CD4-positive, alpha-beta memory T cell (primary cell): ENCODE measurements at regions of chr1 and their contacts with region 1.

Region 1: GRCh38 chr1:168342572-168343280 is 62.0 kb downstream of the TBX19 start:
- DNase-seq: peak; percentile 86 to 91 (median 89)
- H3K4me3 ChIP-seq: no peak overlapping the region
- H3K4me3 Mint-ChIP-seq: peak overlapping the region; percentile 55 to 82 (median 64)
- H3K27ac ChIP-seq: peak overlapping the region; percentile 17
- H3K27ac Mint-ChIP-seq: peak overlapping the region; percentile 91 to 97 (median 93)
- H3K4me1 ChIP-seq: peaks cover 34% of the 10 kb centered on the region
- H3K4me1 Mint-ChIP-seq: peaks cover 34 to 74% (median 49%) of the 10 kb centered on the region in 4 donors
- H3K27me3 ChIP-seq: no peaks in the 10 kb centered on the region
- H3K27me3 Mint-ChIP-seq: no peaks in the 10 kb centered on the region

Region 2: GRCh38 chr1:168328731-168329399 is 13.9 kb before region 1 on chr1:
- CTCF ChIA-PET with region 1: interaction called, 19 read pairs
- POLR2A ChIA-PET with region 1: no interaction called
- intact Hi-C with region 1: no loop called
- DNase-seq: no peak
- H3K4me3 ChIP-seq: no peak overlapping the region
- H3K4me3 Mint-ChIP-seq: no peak overlapping the region
- H3K27ac ChIP-seq: no peak overlapping the region
- H3K27ac Mint-ChIP-seq: peak overlapping the region in 1 of 7 donors; percentile 19
- H3K4me1 ChIP-seq: no peaks in the 10 kb centered on the region
- H3K4me1 Mint-ChIP-seq: no peaks in the 10 kb centered on the region
- H3K27me3 ChIP-seq: no peaks in the 10 kb centered on the region
- H3K27me3 Mint-ChIP-seq: no peaks in the 10 kb centered on the region

Region 3: GRCh38 chr1:168386949-168387586 is 44.3 kb after region 1 on chr1:
- CTCF ChIA-PET with region 1: interaction called, 32 read pairs
- POLR2A ChIA-PET with region 1: interaction called, 6 read pairs
- intact Hi-C with region 1: no loop called
- DNase-seq: peak; percentile 73 to 85 (median 77)
- H3K4me3 ChIP-seq: peak overlapping the region in 1 of 2 donors; percentile 41
- H3K4me3 Mint-ChIP-seq: peak overlapping the region; percentile 59 to 87 (median 71)
- H3K27ac ChIP-seq: no peak overlapping the region
- H3K27ac Mint-ChIP-seq: peak overlapping the region; percentile 84 to 98 (median 94)
- H3K4me1 ChIP-seq: peaks cover 18% of the 10 kb centered on the region
- H3K4me1 Mint-ChIP-seq: peaks cover 11 to 35% (median 25%) of the 10 kb centered on the region in 4 donors
- H3K27me3 ChIP-seq: no peaks in the 10 kb centered on the region
- H3K27me3 Mint-ChIP-seq: peaks cover 0 to 2% of the 10 kb centered on the region in 2 donors

Region 4: DNA sequence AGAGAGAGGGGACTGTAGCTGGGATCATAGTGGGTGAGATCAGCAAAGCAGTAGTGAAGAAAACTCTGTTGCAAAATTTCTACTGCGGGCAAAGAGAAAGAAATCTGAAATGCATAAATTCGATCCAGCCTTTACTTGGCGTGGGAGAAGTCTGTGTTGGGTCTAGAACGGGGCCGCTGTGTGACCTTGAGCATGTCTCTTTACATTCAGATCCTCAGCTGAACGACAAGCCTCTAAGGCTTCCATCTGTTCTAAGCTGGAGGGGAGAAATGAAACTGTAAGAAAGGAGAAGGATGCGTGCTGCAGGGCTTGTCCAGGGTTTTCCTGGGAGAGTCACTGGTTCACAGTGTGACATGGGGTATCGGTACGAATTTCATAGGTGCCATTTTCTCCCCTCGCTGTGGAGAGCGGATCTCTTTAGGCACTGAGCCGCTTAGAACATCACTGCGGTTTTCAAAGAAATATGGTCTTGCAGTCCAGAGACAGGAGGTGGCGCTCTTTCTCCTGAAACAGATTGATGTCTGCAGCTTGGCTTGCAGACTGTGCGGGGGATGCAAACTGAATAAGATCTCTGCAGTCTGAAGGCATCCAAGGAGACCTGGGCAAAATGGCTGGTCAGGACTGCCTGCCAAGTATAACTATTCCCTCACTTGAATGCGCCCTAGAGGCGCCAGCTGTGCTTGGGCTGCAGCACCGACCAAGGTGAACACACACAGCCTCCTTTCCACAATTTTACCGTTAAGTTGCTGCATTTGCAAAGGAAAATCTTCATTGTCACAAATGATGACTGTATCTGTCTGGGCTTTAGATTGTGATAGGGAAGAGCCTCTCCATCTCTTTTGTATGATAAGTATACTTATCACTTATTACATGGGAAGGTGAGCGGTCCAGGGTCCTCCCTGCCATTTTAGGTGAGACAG is 97.0 kb after region 1 on chr1:
- CTCF ChIA-PET with region 1: interaction called, 249 read pairs
- POLR2A ChIA-PET with region 1: interaction called, 34 read pairs
- intact Hi-C with region 1: loop called (anchors 1 kb)
- DNase-seq: peak; percentile 80 to 84 (median 82)
- H3K4me3 ChIP-seq: peak overlapping the region in 1 of 2 donors; percentile 46
- H3K4me3 Mint-ChIP-seq: peak overlapping the region; percentile 66 to 92 (median 82)
- H3K27ac ChIP-seq: no peak overlapping the region
- H3K27ac Mint-ChIP-seq: peak overlapping the region; percentile 70 to 93 (median 88)
- H3K4me1 ChIP-seq: peaks cover 51% of the 10 kb centered on the region
- H3K4me1 Mint-ChIP-seq: peaks cover 34 to 69% (median 46%) of the 10 kb centered on the region in 4 donors
- H3K27me3 ChIP-seq: no peaks in the 10 kb centered on the region
- H3K27me3 Mint-ChIP-seq: no peaks in the 10 kb centered on the region

Region 5: GRCh38 chr1:168603501-168604110 is 260.9 kb after region 1 on chr1:
- CTCF ChIA-PET with region 1: interaction called, 25 read pairs
- POLR2A ChIA-PET with region 1: interaction called, 4 read pairs
- intact Hi-C with region 1: no loop called
- DNase-seq: peak; percentile 53 to 61 (median 57)
- H3K4me3 ChIP-seq: no peak overlapping the region
- H3K4me3 Mint-ChIP-seq: no peak overlapping the region
- H3K27ac ChIP-seq: no peak overlapping the region
- H3K27ac Mint-ChIP-seq: peak overlapping the region in 1 of 7 donors; percentile 58
- H3K4me1 ChIP-seq: no peaks in the 10 kb centered on the region
- H3K4me1 Mint-ChIP-seq: no peaks in the 10 kb centered on the region
- H3K27me3 ChIP-seq: no peaks in the 10 kb centered on the region
- H3K27me3 Mint-ChIP-seq: no peaks in the 10 kb centered on the region

Region 6: GRCh38 chr1:169694304-169695075 is 1351.8 kb after region 1 on chr1:
- CTCF ChIA-PET with region 1: no interaction called
- POLR2A ChIA-PET with region 1: no interaction called
- intact Hi-C with region 1: loop called (anchors 10 kb)
- DNase-seq: peak; percentile 76 to 84 (median 79)
- H3K4me3 ChIP-seq: no peak overlapping the region
- H3K4me3 Mint-ChIP-seq: peak overlapping the region; percentile 55 to 83 (median 68)
- H3K27ac ChIP-seq: peak overlapping the region; percentile 43
- H3K27ac Mint-ChIP-seq: peak overlapping the region in 6 of 7 donors; percentile 90 to 95 (median 92)
- H3K4me1 ChIP-seq: peaks cover 99% of the 10 kb centered on the region
- H3K4me1 Mint-ChIP-seq: peaks cover 81 to 97% (median 88%) of the 10 kb centered on the region in 4 donors
- H3K27me3 ChIP-seq: no peaks in the 10 kb centered on the region
- H3K27me3 Mint-ChIP-seq: no peaks in the 10 kb centered on the region